ENCODE measurements at regions of chr17 and their contacts with region 1.

Region 1: GRCh38 chr17:45828628-45829027 is 16.1 kb upstream of the SPPL2C start:
- DNase-seq: no peak
- ATAC-seq: 0 out of 2 replicates have a peak, but pooled peaks have one; percentile 28
- H3K4me3 ChIP-seq: no peak overlapping the region
- H3K27ac ChIP-seq: no peak overlapping the region
- H3K4me1 ChIP-seq: peaks cover 0 to 7% of the 10 kb centered on the region in 2 experiments; a peak in 2 of 4 replicates
- H3K27me3 ChIP-seq: no peaks in the 10 kb centered on the region
- CTCF ChIP-seq: peak in 2 of 3 experiments; percentile 5 to 26; a peak in 1 of 6 replicates
- POLR2A ChIP-seq: no peak
- RAD21 ChIP-seq: no peak; the same call in 1 of the 2 replicates

Region 2: GRCh38 chr17:45428050-45428617 is 400.5 kb before region 1 on chr17:
- CTCF ChIA-PET with region 1: interaction called, 3 read pairs
- POLR2A ChIA-PET with region 1: no interaction called
- RAD21 ChIA-PET with region 1: no interaction called
- intact Hi-C with region 1: loop called (anchors 1 kb)
- DNase-seq: peak; percentile 57
- ATAC-seq: peak; percentile 35
- H3K4me3 ChIP-seq: peak overlapping the region; percentile 3 to 8; a peak in 1 of 4 replicates
- H3K27ac ChIP-seq: no peak overlapping the region
- H3K4me1 ChIP-seq: peaks cover 16 to 56% of the 10 kb centered on the region in 2 experiments
- H3K27me3 ChIP-seq: no peaks in the 10 kb centered on the region
- CTCF ChIP-seq: peak; percentile 93 to 99 (median 99)
- POLR2A ChIP-seq: no peak
- RAD21 ChIP-seq: peak; percentile 98

Region 3: GRCh38 chr17:45640141-45640850 is 188.3 kb before region 1 on chr17:
- CTCF ChIA-PET with region 1: interaction called, 163 read pairs
- POLR2A ChIA-PET with region 1: interaction called, 8 read pairs
- RAD21 ChIA-PET with region 1: interaction called, 10 to 12 read pairs
- intact Hi-C with region 1: loop called (anchors 1 kb)
- DNase-seq: peak; percentile 78
- ATAC-seq: peak; percentile 97
- H3K4me3 ChIP-seq: no peak overlapping the region
- H3K27ac ChIP-seq: no peak overlapping the region
- H3K4me1 ChIP-seq: no peaks in the 10 kb centered on the region
- H3K27me3 ChIP-seq: no peaks in the 10 kb centered on the region
- CTCF ChIP-seq: peak; percentile 95 to 100 (median 100)
- POLR2A ChIP-seq: no peak
- RAD21 ChIP-seq: peak; percentile 99

Region 4: DNA sequence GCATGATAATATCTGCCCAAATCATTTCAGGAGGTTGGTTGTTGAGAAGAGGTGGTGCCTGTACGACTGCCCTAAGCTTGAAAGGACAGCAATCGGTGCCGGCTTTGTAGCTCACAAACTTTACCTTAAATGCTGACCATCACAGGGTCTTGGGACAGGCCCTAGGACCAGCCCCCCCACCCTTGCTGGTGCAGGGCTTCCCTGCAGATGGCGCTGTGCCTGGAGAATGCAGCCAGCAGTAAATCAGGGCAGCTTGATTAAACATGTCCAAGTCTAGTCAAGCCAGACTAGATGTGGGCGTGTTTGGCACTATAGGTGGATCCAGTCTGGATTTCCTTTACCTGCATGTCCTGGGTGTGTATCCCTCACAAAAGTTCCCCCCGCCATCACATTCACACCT is 180.0 kb before region 1 on chr17:
- CTCF ChIA-PET with region 1: interaction called, 163 read pairs
- POLR2A ChIA-PET with region 1: no interaction called
- RAD21 ChIA-PET with region 1: interaction called in 1 of 2 experiments, 4 read pairs
- intact Hi-C with region 1: no loop called
- DNase-seq: no peak
- ATAC-seq: peak; percentile 73
- H3K4me3 ChIP-seq: no peak overlapping the region
- H3K27ac ChIP-seq: no peak overlapping the region
- H3K4me1 ChIP-seq: no peaks in the 10 kb centered on the region
- H3K27me3 ChIP-seq: no peaks in the 10 kb centered on the region
- CTCF ChIP-seq: peak; percentile 55 to 78 (median 74); a peak in 5 of 6 replicates
- POLR2A ChIP-seq: no peak
- RAD21 ChIP-seq: peak; percentile 58

Region 5: DNA sequence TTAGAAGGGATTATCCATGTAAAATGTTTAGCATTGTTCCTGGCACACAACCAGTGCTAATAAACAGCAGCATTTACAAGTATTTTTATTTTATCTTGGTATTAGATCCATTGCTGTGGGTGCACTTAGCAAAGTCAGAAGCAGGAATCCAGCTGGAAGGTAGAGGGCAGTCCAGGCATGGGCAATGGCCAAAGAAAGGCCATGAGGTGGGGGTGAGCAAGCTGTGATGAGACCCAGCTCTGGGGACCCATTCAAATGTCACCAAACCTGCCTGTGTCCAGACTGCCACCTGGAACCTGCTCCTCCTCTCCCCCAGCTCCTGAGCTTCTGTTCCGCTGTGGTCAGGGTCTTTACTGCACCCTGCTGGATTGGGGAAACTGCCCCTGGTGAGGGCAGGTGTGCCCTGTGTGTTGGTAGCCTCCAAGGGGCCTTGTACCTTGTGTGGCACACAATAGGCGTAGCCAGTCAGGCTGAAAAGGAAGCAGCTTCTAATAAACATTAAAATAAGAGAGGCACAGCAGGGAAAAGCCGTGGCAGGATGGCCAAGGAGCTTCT is 162.5 kb before region 1 on chr17:
- CTCF ChIA-PET with region 1: interaction called, 33 read pairs
- POLR2A ChIA-PET with region 1: no interaction called
- RAD21 ChIA-PET with region 1: interaction called in 1 of 2 experiments, 3 read pairs
- intact Hi-C with region 1: loop called (anchors 1 kb)
- DNase-seq: no peak
- ATAC-seq: 0 out of 2 replicates have a peak, but pooled peaks have one; percentile 23
- H3K4me3 ChIP-seq: no peak overlapping the region
- H3K27ac ChIP-seq: no peak overlapping the region
- H3K4me1 ChIP-seq: no peaks in the 10 kb centered on the region
- H3K27me3 ChIP-seq: 0 out of 2 replicates have a peak, but pooled peaks cover 11% of the 10 kb centered on the region
- CTCF ChIP-seq: peak; percentile 49 to 78 (median 53)
- POLR2A ChIP-seq: no peak
- RAD21 ChIP-seq: peak; percentile 84

Region 6: DNA sequence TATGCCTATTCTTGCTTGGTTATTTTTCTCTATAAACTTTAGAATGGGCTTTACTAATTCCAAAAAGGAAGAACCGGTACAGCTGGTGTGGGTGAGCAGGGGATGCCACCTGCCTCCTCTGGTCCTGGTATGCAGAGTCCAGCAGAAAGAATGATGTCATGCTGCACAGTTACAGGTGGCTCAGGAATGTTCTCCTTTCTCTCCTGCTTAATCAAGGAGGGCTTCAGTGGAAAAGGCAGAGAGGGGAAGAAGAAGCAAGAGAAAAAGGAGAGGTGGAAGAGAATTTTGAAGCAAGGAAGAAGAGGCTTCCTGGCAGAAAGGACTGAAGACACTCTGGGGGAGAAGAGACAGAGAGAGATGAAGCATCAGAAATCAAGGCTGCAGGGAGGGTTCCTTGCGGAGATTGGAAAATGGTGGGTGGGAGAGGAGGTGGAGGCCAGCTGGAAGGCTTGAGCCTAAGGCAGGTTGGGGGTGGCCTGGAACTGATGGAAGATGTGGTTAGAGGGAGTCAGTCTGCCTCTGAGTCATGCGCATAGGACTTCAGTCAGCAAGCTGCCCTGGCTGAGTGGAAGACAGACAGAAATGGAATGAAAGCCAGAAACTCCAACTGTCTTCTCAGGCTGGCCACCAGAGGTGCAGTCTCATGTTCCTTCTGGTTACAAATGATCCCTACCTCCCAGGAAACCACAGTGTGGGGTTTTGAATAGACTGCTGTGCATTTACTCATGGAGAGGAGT is 109.1 kb before region 1 on chr17:
- CTCF ChIA-PET with region 1: interaction called, 15 read pairs
- POLR2A ChIA-PET with region 1: interaction called, 3 read pairs
- RAD21 ChIA-PET with region 1: interaction called in 1 of 2 experiments, 3 read pairs
- intact Hi-C with region 1: loop called (anchors 5 kb)
- DNase-seq: peak; percentile 64
- ATAC-seq: peak; percentile 96
- H3K4me3 ChIP-seq: no peak overlapping the region
- H3K27ac ChIP-seq: no peak overlapping the region
- H3K4me1 ChIP-seq: peaks cover 10 to 11% of the 10 kb centered on the region in 2 experiments
- H3K27me3 ChIP-seq: no peaks in the 10 kb centered on the region
- CTCF ChIP-seq: peak; percentile 32 to 78 (median 73); a peak in 5 of 6 replicates
- POLR2A ChIP-seq: no peak
- RAD21 ChIP-seq: peak; percentile 54

Region 7: GRCh38 chr17:45852535-45853297 is 24.1 kb after region 1 on chr17:
- CTCF ChIA-PET with region 1: interaction called, 14 read pairs
- POLR2A ChIA-PET with region 1: no interaction called
- RAD21 ChIA-PET with region 1: no interaction called
- intact Hi-C with region 1: no loop called
- DNase-seq: peak; percentile 60
- ATAC-seq: peak; percentile 81
- H3K4me3 ChIP-seq: peak overlapping the region in 1 of 2 experiments; percentile 25; a peak in 3 of 4 replicates
- H3K27ac ChIP-seq: no peak overlapping the region
- H3K4me1 ChIP-seq: peaks cover 0 to 6% of the 10 kb centered on the region in 2 experiments; a peak in 2 of 4 replicates
- H3K27me3 ChIP-seq: no peaks in the 10 kb centered on the region
- CTCF ChIP-seq: peak; percentile 96 to 99 (median 99)
- POLR2A ChIP-seq: no peak
- RAD21 ChIP-seq: peak; percentile 98

Measured in HCT116 (cell line).